GM13977 (cell line): ENCODE measurements at regions of chr9 and their contacts with region 1.

Region 1: DNA sequence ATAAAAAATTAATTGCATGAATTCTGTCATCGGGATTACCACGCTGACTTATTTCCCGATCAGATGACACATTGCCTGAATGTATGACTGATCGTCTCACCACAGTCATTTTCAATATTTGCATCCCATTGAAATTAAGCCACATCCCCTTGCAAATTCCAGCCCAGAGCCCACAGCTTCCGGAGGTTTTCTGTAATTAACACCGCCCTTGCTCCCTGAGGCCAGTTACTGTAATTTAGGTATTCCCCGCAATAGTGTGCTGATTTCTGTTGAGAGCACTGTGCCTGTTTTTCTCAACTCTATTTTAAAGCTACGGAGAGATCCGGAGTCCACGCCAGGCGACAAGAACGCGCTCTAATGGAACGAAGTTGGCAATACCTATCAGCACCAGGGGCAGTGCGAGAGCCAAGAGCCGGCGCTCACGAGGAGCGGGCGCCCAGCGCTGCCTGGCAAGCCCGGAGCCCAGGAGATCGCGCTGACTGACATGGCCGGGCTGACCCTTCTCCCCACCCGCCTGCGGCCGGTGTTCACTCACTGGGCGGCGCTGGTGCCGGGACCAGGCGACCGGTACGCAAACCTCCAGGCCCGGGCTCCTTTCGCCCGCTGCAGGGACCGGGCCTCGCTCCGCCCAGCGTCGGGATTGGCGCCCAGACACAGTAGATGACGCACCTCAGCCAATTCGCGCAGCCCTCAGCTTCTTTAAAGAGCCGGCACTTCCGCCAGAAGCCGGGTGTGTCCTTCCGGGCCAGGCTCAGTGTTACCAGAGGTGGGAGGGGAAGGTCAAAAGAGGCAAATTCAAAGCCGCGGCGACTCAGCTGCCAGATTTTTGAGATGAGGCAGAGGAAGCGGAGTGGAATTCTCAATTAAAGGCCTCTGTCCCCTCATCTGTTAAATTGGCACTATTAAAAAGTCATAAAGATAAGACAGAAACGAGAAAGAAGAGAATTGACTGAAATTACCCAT is at the start of gene PLGRKT:
- DNase-seq: peak; percentile 89
- CTCF ChIP-seq: no peak

Region 2: DNA sequence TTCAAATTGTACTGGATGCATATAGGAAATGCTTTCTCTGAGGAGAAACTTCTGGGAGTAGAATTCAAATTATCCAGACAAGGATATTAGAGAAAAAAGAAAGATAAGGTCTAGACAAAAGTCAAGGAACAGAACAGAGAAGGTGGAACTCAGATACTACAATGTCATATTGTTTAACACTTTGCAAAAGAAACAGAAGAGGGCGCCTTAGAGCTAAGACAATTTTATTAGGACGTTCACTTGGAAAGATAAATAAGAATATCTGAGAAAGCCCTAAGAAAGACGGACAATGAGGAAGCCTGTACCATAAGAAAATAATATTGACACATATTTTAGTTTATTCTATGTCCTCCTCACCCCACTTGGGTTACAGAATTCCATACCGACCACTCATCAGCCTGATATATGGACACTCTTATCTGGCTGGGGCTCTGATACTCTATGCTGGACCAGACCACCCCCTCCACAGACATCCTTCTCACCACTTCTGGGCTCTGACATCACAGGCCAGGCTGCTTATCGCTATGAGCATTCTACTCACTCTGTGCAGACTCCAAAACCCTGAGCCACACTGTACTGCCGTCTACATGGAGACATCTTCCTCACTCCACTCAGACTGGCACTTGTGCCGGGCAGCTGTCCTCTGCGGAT is 687.4 kb before region 1 on chr9:
- in situ Hi-C with region 1: loop called (anchors 10 kb)
- DNase-seq: peak; percentile 40
- CTCF ChIP-seq: peak; percentile 64

Region 3: GRCh38 chr9:4774209-4774608 is 663.3 kb before region 1 on chr9:
- in situ Hi-C with region 1: no loop called
- DNase-seq: no peak
- CTCF ChIP-seq: no peak

Region 4: DNA sequence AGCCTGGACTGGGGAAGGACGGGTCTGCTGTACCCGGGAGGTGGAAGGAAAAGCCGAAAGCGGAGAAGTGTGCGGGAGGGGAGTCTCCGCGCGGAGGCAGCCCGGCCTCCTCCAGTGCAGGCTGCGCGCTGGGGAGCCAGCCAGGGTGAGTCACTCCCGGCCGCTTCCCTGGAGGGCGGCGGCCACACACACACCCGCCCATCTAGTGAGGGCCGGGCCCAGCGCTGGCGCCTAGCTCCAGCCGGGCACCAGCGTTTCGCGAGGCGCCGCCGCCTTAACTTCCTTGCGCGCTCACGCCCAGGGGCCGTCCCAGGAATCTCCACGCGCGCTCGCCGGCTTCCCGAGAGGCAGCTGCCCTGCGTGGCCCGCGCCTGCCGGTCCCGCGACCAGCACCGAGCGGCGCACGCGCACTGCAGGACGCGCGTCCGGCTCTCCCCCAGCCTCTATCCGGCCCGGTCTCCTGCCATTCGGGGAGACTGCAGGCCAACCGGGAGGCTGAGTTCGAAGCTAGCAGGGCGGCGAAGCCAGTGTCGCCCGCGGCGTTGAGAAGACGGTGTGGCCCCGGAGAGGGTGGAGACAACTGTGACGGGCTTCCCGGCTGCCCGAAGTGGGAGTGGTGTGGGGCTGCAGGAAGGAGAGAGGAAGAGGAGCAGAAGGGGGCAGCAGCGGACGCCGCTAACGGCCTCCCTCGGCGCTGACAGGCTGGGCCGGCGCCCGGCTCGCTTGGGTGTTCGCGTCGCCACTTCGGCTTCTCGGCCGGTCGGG is 452.7 kb before region 1 on chr9 and contains the start of gene JAK2:
- in situ Hi-C with region 1: loop called (anchors 25 kb)
- DNase-seq: peak; percentile 82
- CTCF ChIP-seq: peak; percentile 61

Region 5: GRCh38 chr9:5195453-5195852 is 242.1 kb before region 1 on chr9:
- in situ Hi-C with region 1: loop called (anchors 10 kb)
- DNase-seq: no peak
- CTCF ChIP-seq: no peak

Region 6: GRCh38 chr9:5593904-5594303 is 156.4 kb after region 1 on chr9:
- in situ Hi-C with region 1: loop called (anchors 10 kb)
- DNase-seq: peak; percentile 44
- CTCF ChIP-seq: no peak